ENCODE measurements at regions of chr5 and their contacts with region 1.

Region 1: DNA sequence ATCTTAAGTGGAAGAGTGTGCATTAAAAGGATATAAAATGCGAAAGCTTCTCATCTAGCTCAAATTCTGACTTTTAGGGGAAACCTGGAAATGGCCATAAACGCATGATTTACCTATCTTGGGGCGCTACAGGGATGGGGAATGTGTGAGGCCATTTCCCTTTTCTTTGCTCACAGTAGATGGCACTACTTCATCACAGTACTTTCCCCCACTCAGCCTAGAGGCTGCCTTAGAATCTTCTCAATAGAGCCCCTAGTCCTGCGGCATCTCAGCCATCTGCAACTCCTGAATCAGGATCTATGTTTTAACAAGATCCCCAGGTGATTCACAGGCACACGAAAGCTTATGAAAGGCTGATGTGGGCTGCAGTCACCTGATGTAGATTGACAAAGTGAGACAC is 110.8 kb downstream of the LHFPL2 start:
- DNase-seq: no peak
- ATAC-seq: peak; percentile 67 to 77 (median 70)
- H3K4me3 ChIP-seq: no peak overlapping the region
- H3K27ac ChIP-seq: peak overlapping the region in 2 of 10 donors; percentile 10 to 25
- H3K4me1 ChIP-seq: peaks cover 5 to 82% (median 46%) of the 10 kb centered on the region in 9 donors
- H3K27me3 ChIP-seq: no peaks in the 10 kb centered on the region
- CTCF ChIP-seq: peak in 8 of 9 donors; percentile 43 to 80 (median 62)

Region 2: DNA sequence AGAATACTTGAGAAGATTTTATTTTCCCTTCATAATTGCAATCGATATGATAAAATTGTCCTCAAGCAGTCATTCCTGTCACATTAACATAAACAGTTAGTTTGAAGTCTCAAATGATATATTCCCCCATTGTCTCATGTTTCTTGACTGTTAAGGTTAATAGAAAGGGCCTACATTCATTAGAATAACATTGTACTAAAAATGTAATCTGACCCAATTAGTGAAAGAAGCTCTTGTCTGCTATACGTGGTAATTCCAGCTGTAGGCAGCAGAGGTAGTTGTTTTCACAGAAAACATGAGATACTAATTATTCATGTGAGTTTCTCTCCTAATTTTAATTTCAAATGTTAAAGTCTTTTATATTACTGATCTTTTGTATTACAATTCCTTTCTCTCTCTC is 217.4 kb before region 1 on chr5:
- intact Hi-C with region 1: loop called in 2 of 10 experiments (anchors 5 to 10 kb)
- DNase-seq: no peak
- ATAC-seq: no peak
- H3K4me3 ChIP-seq: no peak overlapping the region
- H3K27ac ChIP-seq: no peak overlapping the region
- H3K4me1 ChIP-seq: no peaks in the 10 kb centered on the region
- H3K27me3 ChIP-seq: no peaks in the 10 kb centered on the region
- CTCF ChIP-seq: peak in 8 of 9 donors; percentile 15 to 72 (median 64)

Region 3: GRCh38 chr5:78377056-78377717 is 160.6 kb before region 1 on chr5:
- intact Hi-C with region 1: no loop called
- DNase-seq: peak; percentile 11 to 16
- ATAC-seq: peak in 6 of 8 donors; percentile 28 to 86 (median 68)
- H3K4me3 ChIP-seq: no peak overlapping the region
- H3K27ac ChIP-seq: peak overlapping the region in 5 of 10 donors; percentile 3 to 45 (median 21)
- H3K4me1 ChIP-seq: peaks cover 0 to 30% (median 19%) of the 10 kb centered on the region in 9 donors
- H3K27me3 ChIP-seq: no peaks in the 10 kb centered on the region
- CTCF ChIP-seq: no peak

Region 4: DNA sequence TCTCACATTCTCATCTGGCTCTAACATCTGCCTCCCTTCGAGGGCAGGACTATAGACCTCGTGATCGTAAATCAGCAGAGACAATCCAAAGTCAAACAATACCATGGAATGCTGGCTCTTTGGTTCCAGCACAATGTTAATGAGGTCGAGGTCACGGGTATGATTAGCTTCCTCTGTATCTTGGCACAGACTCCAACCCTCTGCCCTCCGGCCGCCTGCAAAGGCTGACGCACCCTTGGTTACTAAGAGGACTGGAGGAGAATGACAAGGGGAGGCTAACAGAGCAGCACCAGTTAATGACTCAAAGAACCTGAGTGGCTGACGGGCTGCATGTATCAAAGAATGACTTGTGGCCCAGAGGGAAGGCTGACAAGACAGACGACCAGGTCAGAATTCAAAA is 100.6 kb after region 1 on chr5:
- intact Hi-C with region 1: loop called in 3 of 10 experiments (anchors 10 kb)
- DNase-seq: peak; percentile 53 to 76
- ATAC-seq: peak; percentile 88 to 97 (median 94)
- H3K4me3 ChIP-seq: peak overlapping the region in 1 of 10 donors; percentile 1
- H3K27ac ChIP-seq: peak overlapping the region in 8 of 10 donors; percentile 17 to 67 (median 52)
- H3K4me1 ChIP-seq: peaks cover 11 to 70% (median 52%) of the 10 kb centered on the region in 9 donors
- H3K27me3 ChIP-seq: no peaks in the 10 kb centered on the region
- CTCF ChIP-seq: no peak

Region 5: DNA sequence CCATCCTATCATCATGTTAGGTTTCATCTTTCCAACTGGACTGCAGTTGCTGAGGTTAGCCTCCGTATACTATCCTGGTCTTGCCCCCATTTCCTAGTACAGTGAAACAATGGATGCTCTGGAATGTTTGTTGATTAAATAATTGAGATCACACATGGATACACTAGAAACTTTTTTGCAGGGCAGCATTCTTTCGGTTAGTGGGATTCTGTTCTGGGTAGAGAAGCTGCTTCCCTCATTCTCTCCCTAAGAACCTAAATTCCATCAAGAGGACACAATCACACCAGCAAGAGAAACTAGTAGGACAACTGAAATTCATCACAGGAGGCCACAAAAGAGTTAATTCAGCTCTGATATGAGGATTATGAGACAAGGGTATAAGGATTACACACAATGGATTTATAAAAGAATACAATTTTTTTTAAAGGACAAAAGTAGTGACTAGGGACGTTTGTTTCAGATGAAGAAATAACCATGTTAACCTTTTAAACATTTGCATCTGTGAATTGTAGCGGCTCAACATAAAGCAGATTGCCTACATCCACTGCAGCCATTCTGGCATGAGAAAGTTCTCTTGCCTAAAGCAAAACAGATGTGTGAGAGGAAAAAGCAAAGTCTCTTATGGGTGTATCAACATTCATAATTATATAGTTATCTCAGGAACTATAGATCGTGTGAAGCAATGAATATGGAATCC is 273.4 kb after region 1 on chr5:
- intact Hi-C with region 1: loop called in 1 of 10 experiments (anchors 10 kb)
- DNase-seq: no peak
- ATAC-seq: no peak
- H3K4me3 ChIP-seq: no peak overlapping the region
- H3K27ac ChIP-seq: no peak overlapping the region
- H3K4me1 ChIP-seq: peaks cover 0 to 36% (median 18%) of the 10 kb centered on the region in 9 donors
- H3K27me3 ChIP-seq: no peaks in the 10 kb centered on the region
- CTCF ChIP-seq: no peak

Region 6: GRCh38 chr5:78964887-78965286 is 427.1 kb after region 1 on chr5:
- intact Hi-C with region 1: loop called (anchors 2 to 10 kb)
- DNase-seq: peak in 1 of 2 donors; percentile 41
- ATAC-seq: peak; percentile 69 to 90 (median 81)
- H3K4me3 ChIP-seq: no peak overlapping the region
- H3K27ac ChIP-seq: no peak overlapping the region
- H3K4me1 ChIP-seq: no peaks in the 10 kb centered on the region
- H3K27me3 ChIP-seq: no peaks in the 10 kb centered on the region
- CTCF ChIP-seq: peak; percentile 8 to 76 (median 55)

Measured in heart right ventricle (tissue), 16 donors.